Activated T-helper 1 cell treated with anti-CD3 and anti-CD28 coated beads, Interleukin-12 subunit alpha, Interleukin-12 subunit beta, Interleukin-2, Interleukin-4 antibody, amounts not matched to agents 30 ng/mL and 10 ng/mL and 1 ng/mL, durations not matched to agents 14 hours and 24 hours and 36 hours (primary cell): ENCODE measurements at regions of chr2 and their contacts with region 1.

Region 1: GRCh38 chr2:7825591-7826312 is 856.1 kb upstream of the ID2 start:
- DNase-seq: peak; percentile 55
- H3K4me3 Mint-ChIP-seq: peak overlapping the region; percentile 23
- H3K27ac Mint-ChIP-seq: peak overlapping the region; percentile 97
- H3K4me1 Mint-ChIP-seq: peaks cover 41% of the 10 kb centered on the region
- H3K27me3 Mint-ChIP-seq: peaks cover 4% of the 10 kb centered on the region

Region 2: DNA sequence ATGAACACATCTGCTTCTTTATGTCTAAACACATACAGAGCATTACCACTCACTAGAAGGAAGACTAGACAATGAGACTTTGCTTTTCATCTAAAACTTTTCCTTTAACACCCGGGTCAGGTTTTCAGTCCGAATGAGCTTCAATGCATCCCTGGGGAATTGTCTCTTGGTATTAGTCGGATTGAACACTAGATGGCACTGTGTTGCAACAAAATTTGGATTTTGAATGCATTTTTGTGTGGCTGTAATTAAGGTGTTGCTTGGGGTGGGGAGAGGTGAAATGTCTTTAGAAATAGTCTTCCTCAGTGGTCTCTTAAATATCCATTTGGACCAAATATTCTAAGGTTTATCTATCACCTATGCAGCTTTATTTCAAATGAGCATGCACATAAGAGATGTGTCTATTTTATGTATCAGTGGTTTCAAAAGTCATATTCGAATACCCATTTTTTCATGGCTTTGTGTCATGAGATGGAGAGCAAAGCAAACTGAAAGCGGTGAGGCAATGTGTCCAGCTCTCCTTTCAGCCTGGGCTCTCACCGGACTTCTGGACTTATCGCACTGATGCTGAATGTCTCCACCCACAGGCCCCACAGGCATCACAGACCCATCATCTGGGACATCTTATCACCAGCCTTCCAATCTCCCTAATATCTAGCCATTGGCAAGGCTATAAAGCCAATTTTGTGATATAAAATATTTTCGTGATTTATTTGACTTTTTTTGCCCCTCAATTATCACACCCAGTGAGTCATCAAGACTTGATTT is 398.3 kb before region 1 on chr2:
- intact Hi-C with region 1: loop called (anchors 2 kb)
- DNase-seq: peak; percentile 36
- H3K4me3 Mint-ChIP-seq: peak overlapping the region; percentile 2
- H3K27ac Mint-ChIP-seq: peak overlapping the region; percentile 69
- H3K4me1 Mint-ChIP-seq: peaks cover 48% of the 10 kb centered on the region
- H3K27me3 Mint-ChIP-seq: peaks cover 3% of the 10 kb centered on the region

Region 3: DNA sequence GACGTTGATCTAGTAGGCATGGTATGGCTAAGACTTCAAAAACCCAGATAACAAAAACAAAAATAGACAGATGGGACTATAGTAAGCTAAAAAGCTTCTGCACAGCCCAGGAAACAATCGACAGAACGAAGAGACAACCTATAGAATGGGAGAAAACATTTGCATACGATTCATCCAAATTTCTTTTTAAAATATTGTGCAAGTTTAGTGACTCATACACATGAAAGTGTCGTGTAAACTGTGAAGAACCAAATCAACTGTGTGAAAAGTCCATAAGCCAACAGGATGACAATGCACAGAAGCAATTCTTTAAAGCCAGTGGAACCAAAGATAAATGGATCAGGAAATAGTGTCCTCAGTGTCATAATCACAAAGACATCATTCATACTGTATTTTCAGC is 237.5 kb before region 1 on chr2:
- intact Hi-C with region 1: loop called (anchors 1 kb)
- DNase-seq: no peak
- H3K4me3 Mint-ChIP-seq: peak overlapping the region; percentile 28
- H3K27ac Mint-ChIP-seq: peak overlapping the region; percentile 61
- H3K4me1 Mint-ChIP-seq: peaks cover 37% of the 10 kb centered on the region
- H3K27me3 Mint-ChIP-seq: no peaks in the 10 kb centered on the region

Region 4: DNA sequence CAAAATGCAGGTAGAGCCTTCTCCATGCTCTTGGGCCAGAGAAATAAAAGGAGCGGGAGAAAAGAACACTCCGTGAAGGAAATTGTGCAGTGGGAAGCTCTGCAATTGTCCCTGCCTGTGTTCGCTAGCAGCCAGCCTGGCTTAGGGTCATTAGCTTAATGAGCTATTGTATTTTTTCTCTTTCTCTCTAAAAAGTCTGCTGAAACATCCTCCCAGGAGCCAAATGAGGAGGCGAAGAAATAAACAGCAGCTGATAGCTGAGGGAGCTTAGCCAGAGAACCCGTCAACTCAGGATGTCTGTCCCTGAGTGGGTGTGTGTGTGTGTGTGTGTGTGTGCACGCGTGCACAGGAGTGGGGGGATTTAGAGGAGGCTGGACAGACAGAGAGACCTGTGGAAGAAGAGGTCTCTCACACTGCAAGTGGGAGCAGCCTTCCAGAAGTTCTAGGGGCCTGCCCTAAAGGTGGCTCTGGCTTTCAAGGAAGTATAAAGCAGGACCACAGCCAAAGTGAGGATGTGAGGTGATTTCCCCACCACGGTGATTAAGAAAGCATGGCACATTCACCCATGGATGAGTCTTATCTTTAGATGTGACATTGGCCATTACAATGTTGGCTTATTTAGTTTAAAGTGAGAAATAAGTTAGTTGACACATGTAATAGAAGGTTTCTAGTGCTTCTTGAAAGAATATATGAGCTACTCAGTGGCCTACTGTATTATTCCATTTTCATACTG is 218.1 kb before region 1 on chr2:
- intact Hi-C with region 1: no loop called
- DNase-seq: no peak
- H3K4me3 Mint-ChIP-seq: no peak overlapping the region
- H3K27ac Mint-ChIP-seq: no peak overlapping the region
- H3K4me1 Mint-ChIP-seq: peaks cover 41% of the 10 kb centered on the region
- H3K27me3 Mint-ChIP-seq: no peaks in the 10 kb centered on the region

Region 5: GRCh38 chr2:7758073-7758759 is 67.5 kb before region 1 on chr2:
- intact Hi-C with region 1: loop called (anchors 1 kb)
- DNase-seq: no peak
- H3K4me3 Mint-ChIP-seq: no peak overlapping the region
- H3K27ac Mint-ChIP-seq: peak overlapping the region; percentile 76
- H3K4me1 Mint-ChIP-seq: peaks cover 22% of the 10 kb centered on the region
- H3K27me3 Mint-ChIP-seq: no peaks in the 10 kb centered on the region

Region 6: GRCh38 chr2:8049851-8050571 is 224.3 kb after region 1 on chr2:
- intact Hi-C with region 1: loop called (anchors 1 kb)
- DNase-seq: peak; percentile 52
- H3K4me3 Mint-ChIP-seq: peak overlapping the region; percentile 43
- H3K27ac Mint-ChIP-seq: peak overlapping the region; percentile 93
- H3K4me1 Mint-ChIP-seq: peaks cover 48% of the 10 kb centered on the region
- H3K27me3 Mint-ChIP-seq: no peaks in the 10 kb centered on the region

Region 7: GRCh38 chr2:8416849-8417832 is 591.4 kb after region 1 on chr2:
- intact Hi-C with region 1: no loop called
- DNase-seq: no peak
- H3K4me3 Mint-ChIP-seq: no peak overlapping the region
- H3K27ac Mint-ChIP-seq: no peak overlapping the region
- H3K4me1 Mint-ChIP-seq: peaks cover 4% of the 10 kb centered on the region
- H3K27me3 Mint-ChIP-seq: peaks cover 30% of the 10 kb centered on the region

Region 8: GRCh38 chr2:8477552-8478470 is 652.1 kb after region 1 on chr2:
- intact Hi-C with region 1: loop called (anchors 2 kb)
- DNase-seq: no peak
- H3K4me3 Mint-ChIP-seq: peak overlapping the region; percentile 31
- H3K27ac Mint-ChIP-seq: peak overlapping the region; percentile 76
- H3K4me1 Mint-ChIP-seq: peaks cover 97% of the 10 kb centered on the region
- H3K27me3 Mint-ChIP-seq: no peaks in the 10 kb centered on the region